Psoas muscle (tissue), 8 donors: ENCODE measurements at regions of chr9 and their contacts with region 1.

Region 1: DNA sequence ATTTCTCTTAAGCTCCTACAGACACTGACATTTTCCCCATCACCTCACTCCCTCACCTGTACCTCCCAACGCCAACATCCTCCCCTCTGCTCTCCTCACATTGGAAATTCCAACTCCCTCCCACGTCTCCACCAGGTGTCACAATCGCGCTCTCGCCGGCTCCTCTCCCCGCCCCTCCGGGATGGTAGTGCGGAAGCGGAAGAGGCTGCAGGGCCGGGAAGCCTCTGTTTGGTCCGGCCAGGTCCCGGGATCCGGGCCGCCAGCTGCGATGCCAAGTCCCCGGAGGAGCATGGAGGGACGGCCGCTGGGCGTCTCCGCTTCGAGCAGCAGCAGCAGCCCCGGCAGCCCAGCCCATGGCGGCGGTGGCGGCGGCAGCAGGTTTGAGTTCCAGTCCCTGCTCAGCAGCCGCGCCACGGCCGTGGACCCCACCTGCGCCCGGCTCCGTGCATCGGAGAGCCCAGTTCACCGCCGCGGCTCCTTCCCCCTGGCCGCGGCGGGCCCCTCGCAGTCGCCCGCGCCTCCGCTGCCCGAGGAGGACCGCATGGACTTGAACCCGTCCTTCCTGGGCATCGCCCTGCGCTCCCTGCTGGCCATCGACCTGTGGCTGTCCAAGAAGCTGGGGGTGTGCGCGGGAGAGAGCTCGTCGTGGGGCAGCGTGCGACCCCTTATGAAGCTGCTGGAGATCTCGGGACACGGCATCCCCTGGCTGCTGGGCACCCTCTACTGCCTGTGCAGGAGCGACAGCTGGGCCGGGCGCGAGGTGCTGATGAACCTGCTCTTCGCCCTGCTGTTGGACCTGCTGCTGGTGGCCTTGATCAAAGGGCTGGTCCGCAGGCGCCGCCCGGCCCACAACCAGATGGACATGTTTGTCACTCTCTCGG is at the start of gene PLPP6:
- DNase-seq: peak; percentile 87 to 94
- ATAC-seq: peak; percentile 96 to 98 (median 97)
- H3K4me3 ChIP-seq: peak within 1 kb of the TSS; percentile 69
- H3K27ac ChIP-seq: peak within 1 kb of the TSS; percentile 60
- H3K4me1 ChIP-seq: peaks cover 24% of the 10 kb centered on the region
- H3K27me3 ChIP-seq: no peaks in the 10 kb centered on the region
- CTCF ChIP-seq: peak; percentile 50
- total RNA-seq, gene PLPP6: 1.1 to 2.3 (median 1.9) TPM

Region 2: DNA sequence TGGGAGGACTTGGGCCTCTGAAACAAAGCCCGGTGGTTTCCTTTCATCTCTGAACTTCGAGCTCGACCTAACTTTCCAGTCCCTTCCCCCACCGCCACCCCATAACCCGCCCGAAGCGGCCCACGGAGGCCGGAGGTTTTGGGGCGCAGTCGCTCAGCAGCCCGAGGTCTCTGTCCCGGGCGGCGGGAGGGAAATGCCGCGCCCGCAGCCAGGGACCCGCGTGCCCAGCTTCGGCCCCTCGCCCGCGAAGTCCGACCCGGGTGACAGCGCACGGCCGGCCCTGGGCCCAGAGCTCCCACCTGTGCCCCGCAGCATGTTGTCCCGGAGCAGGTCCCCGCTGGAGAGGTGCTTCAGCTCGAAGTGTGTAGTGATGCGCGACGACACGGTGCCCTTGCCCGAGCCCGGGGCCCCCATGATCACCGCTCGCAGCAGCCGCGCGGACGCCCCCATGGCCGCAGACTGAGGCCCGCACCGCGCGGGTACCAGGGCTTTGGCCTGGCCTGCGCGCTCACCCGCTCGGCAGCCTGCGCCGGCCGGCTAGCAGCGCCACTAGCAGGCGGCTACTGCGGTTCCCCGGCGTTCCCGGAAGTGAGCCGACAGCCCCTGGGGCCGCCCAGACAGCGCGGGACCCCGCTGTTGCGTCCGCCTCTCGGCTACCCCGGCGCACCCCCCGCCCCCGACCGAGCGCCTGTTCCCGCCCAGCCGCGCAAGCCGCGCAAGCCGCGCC is 78.5 kb after region 1 on chr9 and contains the start of gene AK3:
- intact Hi-C with region 1: loop called in 1 of 2 experiments (anchors 5 kb)
- DNase-seq: peak; percentile 90 to 95
- ATAC-seq: peak; percentile 88 to 93 (median 90)
- H3K4me3 ChIP-seq: peak within 1 kb of the TSS; percentile 80
- H3K27ac ChIP-seq: peak within 1 kb of the TSS; percentile 85
- H3K4me1 ChIP-seq: peaks cover 13% of the 10 kb centered on the region
- H3K27me3 ChIP-seq: no peaks in the 10 kb centered on the region
- CTCF ChIP-seq: peak; percentile 27
- total RNA-seq, gene AK3: 100 to 143 (median 115) TPM